ENCODE measurements at regions of chr16 and their contacts with region 1.

Region 1: DNA sequence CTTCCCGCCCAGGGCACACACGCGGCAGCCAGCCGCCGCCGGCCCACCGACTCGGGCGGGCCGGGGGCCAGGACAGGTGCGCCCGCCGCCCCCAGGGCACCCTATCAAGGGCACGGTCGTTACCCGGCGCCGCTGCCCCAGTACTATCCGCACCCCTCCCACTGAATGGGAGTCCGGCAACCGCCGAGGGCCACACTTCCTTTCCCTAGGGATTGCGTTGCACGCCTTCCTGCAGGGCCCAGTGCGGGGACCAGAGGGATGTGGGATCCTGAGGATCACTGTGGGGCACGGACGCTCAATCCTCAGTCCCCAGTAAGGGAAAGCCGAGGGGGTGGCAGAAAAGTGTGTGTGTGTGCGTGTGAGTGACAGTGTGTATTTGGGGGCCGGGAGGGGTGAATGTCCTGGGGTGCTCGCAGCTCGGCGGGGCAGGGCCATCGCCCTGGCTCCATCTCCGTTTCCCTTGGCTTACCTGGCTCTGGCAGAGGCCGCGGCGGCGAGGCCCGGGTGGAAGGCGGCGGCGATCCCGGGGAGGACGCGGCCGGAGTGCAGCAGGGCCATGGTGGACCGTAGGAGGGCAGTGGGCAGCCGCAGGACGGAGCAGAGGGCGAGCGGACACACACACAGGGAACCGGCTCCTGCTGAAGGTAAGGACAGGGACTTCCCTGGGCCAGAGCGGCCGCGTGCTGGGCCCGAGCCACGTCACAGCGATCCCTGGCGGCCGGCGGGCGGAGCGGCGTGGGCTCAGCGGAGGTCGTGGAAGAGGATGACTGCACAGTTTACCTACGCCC is at the start of gene GOT2:
- DNase-seq: peak; percentile 80 to 92 (median 84)
- ATAC-seq: peak; percentile 90 to 98 (median 96)
- H3K4me3 ChIP-seq: peak within 1 kb of the TSS; percentile 40 to 99 (median 88)
- H3K27ac ChIP-seq: peak within 1 kb of the TSS; percentile 74 to 94 (median 87)
- H3K4me1 ChIP-seq: peaks cover 6 to 47% (median 22%) of the 10 kb centered on the region in 12 donors
- H3K27me3 ChIP-seq: no peaks in the 10 kb centered on the region
- CTCF ChIP-seq: peak; percentile 77 to 98 (median 92)
- POLR2A ChIP-seq: peak in 1 of 2 donors; percentile 22
- total RNA-seq, gene GOT2: 297 to 590 (median 453) TPM

Region 2: GRCh38 chr16:58699151-58699550 is 34.7 kb before region 1 on chr16:
- intact Hi-C with region 1: loop called in 2 of 10 experiments (anchors 5 kb)
- DNase-seq: no peak
- ATAC-seq: no peak
- H3K4me3 ChIP-seq: no peak overlapping the region
- H3K27ac ChIP-seq: peak overlapping the region in 1 of 12 donors; percentile 33
- H3K4me1 ChIP-seq: peaks cover 0 to 4% (median 0%) of the 10 kb centered on the region in 12 donors
- H3K27me3 ChIP-seq: no peaks in the 10 kb centered on the region
- CTCF ChIP-seq: no peak
- POLR2A ChIP-seq: no peak

Region 3: GRCh38 chr16:58828901-58829545 is 95.2 kb after region 1 on chr16:
- intact Hi-C with region 1: no loop called
- DNase-seq: no peak
- ATAC-seq: no peak
- H3K4me3 ChIP-seq: no peak overlapping the region
- H3K27ac ChIP-seq: no peak overlapping the region
- H3K4me1 ChIP-seq: no peaks in the 10 kb centered on the region
- H3K27me3 ChIP-seq: no peaks in the 10 kb centered on the region
- CTCF ChIP-seq: no peak
- POLR2A ChIP-seq: no peak

Region 4: DNA sequence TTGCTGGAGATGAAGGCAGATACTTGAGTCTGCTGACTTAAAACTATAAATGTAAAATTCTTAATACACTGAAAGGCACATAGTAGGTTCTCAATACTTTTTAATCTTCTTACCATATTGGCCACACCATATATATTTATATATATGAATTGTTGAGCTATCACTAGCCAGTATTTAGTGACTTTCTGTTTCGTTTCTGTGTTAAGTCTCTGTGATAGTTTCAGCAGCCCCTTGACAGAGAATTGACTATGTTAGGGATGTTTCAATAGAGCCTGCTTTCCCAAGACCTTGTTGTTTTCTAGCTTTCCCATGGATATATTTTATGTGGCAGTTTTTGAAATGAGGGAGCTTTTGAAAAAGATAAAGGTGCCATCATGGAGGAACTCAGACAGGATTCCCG is 206.7 kb after region 1 on chr16:
- intact Hi-C with region 1: no loop called
- DNase-seq: no peak
- ATAC-seq: no peak
- H3K4me3 ChIP-seq: no peak overlapping the region
- H3K27ac ChIP-seq: no peak overlapping the region
- H3K4me1 ChIP-seq: peaks cover 0 to 6% (median 0%) of the 10 kb centered on the region in 12 donors
- H3K27me3 ChIP-seq: no peaks in the 10 kb centered on the region
- CTCF ChIP-seq: no peak
- POLR2A ChIP-seq: no peak